ENCODE measurements at regions of chr15 and their contacts with region 1.

Region 1: DNA sequence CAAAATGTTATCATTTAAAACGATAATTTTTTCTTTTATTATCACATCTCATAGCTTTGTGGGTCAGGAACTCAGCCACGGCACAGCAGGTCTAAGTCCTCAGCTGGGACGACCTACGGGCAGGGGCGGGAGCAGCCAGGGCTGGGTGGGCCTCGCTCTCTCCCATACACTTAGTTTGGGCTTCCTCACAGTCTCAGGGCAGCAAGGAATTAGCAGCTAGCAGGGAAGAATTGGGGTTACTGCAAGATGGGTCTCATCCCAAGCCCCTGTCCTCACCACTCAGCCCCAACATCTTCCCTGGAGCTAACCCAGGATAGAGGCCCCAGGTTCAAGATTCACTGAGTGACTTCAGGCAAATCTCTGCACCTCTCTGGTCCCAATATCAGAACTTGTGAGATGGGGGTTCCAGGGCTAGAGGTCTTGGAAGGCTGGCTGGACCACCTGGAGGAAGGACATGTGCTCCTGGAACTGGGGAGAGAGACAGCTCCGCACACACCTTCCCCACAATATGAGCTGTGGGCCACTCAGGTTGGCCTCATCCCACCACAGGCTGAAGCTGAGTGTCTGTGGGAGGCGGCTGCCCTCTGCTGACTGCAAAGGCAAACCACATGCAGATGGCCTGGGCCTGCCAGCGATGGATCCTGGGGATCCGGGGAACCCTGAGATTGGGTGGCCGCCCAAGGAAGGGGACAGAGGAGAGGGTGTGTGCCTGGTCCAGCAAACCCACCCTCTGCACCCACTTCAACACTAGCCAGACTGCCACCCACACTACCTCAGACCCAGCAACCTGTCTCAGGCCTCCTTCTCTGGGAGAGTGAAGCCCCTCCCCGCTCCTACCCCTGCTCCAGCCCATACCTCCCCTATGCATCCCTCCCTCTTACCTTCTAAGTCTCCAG is 45.0 kb downstream of the CYP11A1 start:
- DNase-seq: peak; percentile 56 to 70
- H3K4me3 ChIP-seq: no peak overlapping the region
- H3K27ac ChIP-seq: no peak overlapping the region
- H3K4me1 ChIP-seq: no peaks in the 10 kb centered on the region
- H3K27me3 ChIP-seq: no peaks in the 10 kb centered on the region
- CTCF ChIP-seq: peak; percentile 91

Region 2: DNA sequence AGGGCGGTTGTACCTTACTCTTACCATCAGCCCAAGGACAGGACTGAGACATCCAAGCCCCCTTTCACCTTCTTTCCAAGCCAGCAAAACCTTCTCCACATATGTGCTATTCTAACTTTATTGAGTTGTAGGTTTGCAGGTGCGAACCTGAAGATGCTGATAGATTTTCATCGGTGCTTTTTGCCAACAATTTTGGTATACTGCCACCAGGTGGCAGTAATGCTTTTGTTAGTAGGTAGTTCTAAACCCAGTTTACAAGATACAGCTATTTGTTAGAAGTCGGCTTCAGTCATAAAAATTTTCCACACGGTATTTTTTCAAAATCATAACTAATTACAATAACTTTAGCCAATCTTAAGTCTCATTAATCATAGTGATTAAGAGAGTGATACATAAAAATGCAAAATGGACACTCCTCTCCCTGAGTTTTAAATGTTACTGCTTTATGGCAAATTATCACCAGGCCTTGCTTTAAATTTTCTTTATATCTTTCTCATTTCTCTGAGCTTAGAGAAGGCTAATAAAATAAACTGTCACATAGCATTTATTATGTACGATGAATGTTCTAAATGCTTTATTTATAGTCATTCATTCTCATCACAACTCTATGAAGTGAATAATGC is 448.4 kb before region 1 on chr15:
- CTCF ChIA-PET with region 1: interaction called, 3 read pairs
- POLR2A ChIA-PET with region 1: no interaction called
- intact Hi-C with region 1: loop called (anchors 5 kb)
- DNase-seq: peak; percentile 17 to 60
- H3K4me3 ChIP-seq: no peak overlapping the region
- H3K27ac ChIP-seq: no peak overlapping the region
- H3K4me1 ChIP-seq: no peaks in the 10 kb centered on the region
- H3K27me3 ChIP-seq: peaks cover 46% of the 10 kb centered on the region
- CTCF ChIP-seq: peak; percentile 86

Region 3: GRCh38 chr15:73950831-73951561 is 371.4 kb before region 1 on chr15:
- CTCF ChIA-PET with region 1: interaction called, 6 read pairs
- POLR2A ChIA-PET with region 1: no interaction called
- intact Hi-C with region 1: loop called (anchors 2 kb)
- DNase-seq: peak in 1 of 2 experiments; percentile 79
- H3K4me3 ChIP-seq: no peak overlapping the region
- H3K27ac ChIP-seq: no peak overlapping the region
- H3K4me1 ChIP-seq: peaks cover 9% of the 10 kb centered on the region
- H3K27me3 ChIP-seq: no peaks in the 10 kb centered on the region
- CTCF ChIP-seq: peak; percentile 54

Region 4: DNA sequence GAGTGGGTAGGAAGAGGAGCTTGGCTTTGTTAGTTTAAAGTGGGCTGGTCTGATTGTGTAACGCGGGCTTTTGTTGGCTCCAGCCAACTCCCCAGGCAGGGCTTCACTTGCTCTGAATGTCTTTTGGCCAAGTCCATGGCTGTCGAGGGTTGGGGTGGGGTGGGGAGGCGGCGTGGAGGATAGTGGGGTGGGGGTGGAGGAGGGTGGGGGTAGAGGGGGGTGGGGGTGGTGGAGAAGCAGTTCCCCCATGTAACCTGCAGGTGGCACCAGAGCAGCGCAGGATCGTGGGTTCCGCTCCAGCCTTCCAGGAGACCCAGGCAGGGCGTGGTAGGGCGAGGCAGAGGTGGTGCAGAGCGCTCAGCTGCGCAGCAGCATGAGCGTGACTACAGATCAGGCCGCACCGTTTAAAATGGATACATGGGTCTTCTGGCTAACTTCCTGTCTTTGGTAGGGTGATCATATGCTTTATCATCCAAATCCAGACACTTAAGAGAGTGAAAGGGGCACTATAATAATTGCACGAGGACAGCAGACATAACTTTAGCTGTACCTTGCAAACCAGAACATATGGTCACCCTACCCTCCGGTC is 268.4 kb before region 1 on chr15:
- CTCF ChIA-PET with region 1: interaction called, 8 read pairs
- POLR2A ChIA-PET with region 1: no interaction called
- intact Hi-C with region 1: loop called (anchors 2 kb)
- DNase-seq: peak; percentile 46 to 64
- H3K4me3 ChIP-seq: no peak overlapping the region
- H3K27ac ChIP-seq: no peak overlapping the region
- H3K4me1 ChIP-seq: peaks cover 38% of the 10 kb centered on the region
- H3K27me3 ChIP-seq: no peaks in the 10 kb centered on the region
- CTCF ChIP-seq: peak; percentile 57

Region 5: GRCh38 chr15:74307827-74308644 is 14.4 kb before region 1 on chr15:
- CTCF ChIA-PET with region 1: interaction called, 10 read pairs
- POLR2A ChIA-PET with region 1: no interaction called
- intact Hi-C with region 1: no loop called
- DNase-seq: peak; percentile 59 to 68
- H3K4me3 ChIP-seq: no peak overlapping the region
- H3K27ac ChIP-seq: no peak overlapping the region
- H3K4me1 ChIP-seq: peaks cover 6% of the 10 kb centered on the region; the same call in 1 of the 2 replicates
- H3K27me3 ChIP-seq: no peaks in the 10 kb centered on the region
- CTCF ChIP-seq: peak; percentile 84

Region 6: DNA sequence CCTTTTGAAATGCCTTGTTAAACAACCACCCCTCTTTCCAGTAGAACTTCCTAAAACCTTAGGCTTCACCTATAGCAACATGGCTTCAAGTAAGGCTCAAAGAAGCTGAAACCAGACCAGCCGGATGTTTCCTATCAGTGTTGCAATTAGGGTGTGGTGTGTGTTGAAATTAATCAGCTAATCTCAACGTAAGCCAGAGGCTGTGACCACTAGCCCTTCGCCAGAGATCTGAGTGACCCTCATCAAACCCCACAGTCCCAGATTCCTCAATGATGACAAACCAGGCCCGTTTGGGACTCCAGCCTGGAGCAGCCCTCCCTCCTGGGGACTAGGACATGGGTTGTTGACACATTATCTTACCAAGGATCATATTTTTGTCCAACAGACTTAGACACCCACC is 17.7 kb after region 1 on chr15:
- CTCF ChIA-PET with region 1: interaction called, 12 read pairs
- POLR2A ChIA-PET with region 1: no interaction called
- intact Hi-C with region 1: no loop called
- DNase-seq: peak; percentile 82 to 98
- H3K4me3 ChIP-seq: no peak overlapping the region; the same call in 1 of the 2 replicates
- H3K27ac ChIP-seq: peak overlapping the region; percentile 85
- H3K4me1 ChIP-seq: peaks cover 60% of the 10 kb centered on the region
- H3K27me3 ChIP-seq: no peaks in the 10 kb centered on the region
- CTCF ChIP-seq: no peak

Measured in PC-9 (cell line).